Activated CD4-positive, alpha-beta T cell treated with anti-CD3 and anti-CD28 coated beads for 36 hours (primary cell): ENCODE measurements at regions of chr17 and their contacts with region 1.

Region 1: GRCh38 chr17:48724251-48725003 is 1.4 kb downstream of the PRAC2 start:
- DNase-seq: peak; percentile 91
- ATAC-seq: peak; percentile 78
- H3K4me3 Mint-ChIP-seq: peak overlapping the region; percentile 42
- H3K27ac Mint-ChIP-seq: peak overlapping the region; percentile 55
- H3K4me1 Mint-ChIP-seq: peaks cover 32% of the 10 kb centered on the region
- H3K27me3 Mint-ChIP-seq: peaks cover 81% of the 10 kb centered on the region

Region 2: DNA sequence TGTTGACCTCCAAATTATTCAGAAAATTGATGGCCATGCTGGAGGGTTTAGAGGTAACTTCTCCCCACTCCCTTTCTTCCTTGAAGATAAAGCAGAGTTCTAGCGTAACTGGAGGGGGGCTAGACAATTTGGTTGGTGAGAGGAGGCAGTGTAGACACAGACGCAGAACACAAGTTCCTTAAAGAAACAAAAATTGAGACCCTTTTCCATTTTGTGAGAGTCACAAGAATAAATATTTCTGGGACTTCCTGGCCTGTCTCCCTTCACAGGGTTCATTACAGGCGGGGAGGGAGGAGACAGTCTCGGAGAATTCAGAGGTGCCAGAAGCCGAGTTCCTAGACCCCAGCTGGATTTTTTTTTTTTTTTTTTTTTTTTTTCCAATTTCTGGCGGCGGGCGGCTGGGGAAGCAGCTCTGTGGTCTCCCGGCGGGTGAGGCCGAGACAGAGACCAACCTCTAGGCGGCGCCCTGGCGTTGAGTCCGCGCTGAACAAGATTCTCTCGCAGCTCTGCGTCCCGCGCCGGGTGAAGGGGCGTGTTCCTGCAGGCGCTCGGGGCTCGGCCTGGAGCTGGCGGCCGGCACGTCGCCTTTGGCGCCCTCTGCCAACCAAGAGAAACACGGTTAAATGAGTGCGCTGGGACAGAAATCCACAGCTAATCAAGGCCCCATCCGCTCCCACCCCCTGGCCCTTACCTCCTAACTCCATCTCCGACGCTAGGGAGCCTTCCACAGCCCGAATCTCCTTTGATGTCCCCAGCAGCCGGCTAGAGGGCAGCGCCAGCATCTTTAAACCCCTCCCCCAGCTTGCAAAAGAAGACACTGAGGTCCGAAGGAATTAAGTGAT is 88.0 kb before region 1 on chr17:
- CTCF ChIA-PET with region 1: interaction called, 10 read pairs
- POLR2A ChIA-PET with region 1: no interaction called
- intact Hi-C with region 1: no loop called
- DNase-seq: peak; percentile 91
- ATAC-seq: peak; percentile 95
- H3K4me3 Mint-ChIP-seq: no peak overlapping the region
- H3K27ac Mint-ChIP-seq: no peak overlapping the region
- H3K4me1 Mint-ChIP-seq: no peaks in the 10 kb centered on the region
- H3K27me3 Mint-ChIP-seq: peaks cover 74% of the 10 kb centered on the region

Region 3: GRCh38 chr17:48738803-48739526 is 14.5 kb after region 1 on chr17:
- CTCF ChIA-PET with region 1: interaction called, 37 read pairs
- POLR2A ChIA-PET with region 1: no interaction called
- intact Hi-C with region 1: loop called in 1 of 2 experiments (anchors 2 kb)
- DNase-seq: no peak
- ATAC-seq: peak; percentile 30
- H3K4me3 Mint-ChIP-seq: no peak overlapping the region
- H3K27ac Mint-ChIP-seq: no peak overlapping the region
- H3K4me1 Mint-ChIP-seq: peaks cover 8% of the 10 kb centered on the region
- H3K27me3 Mint-ChIP-seq: peaks cover 83% of the 10 kb centered on the region

Region 4: GRCh38 chr17:48760411-48760810 is 36.0 kb after region 1 on chr17:
- CTCF ChIA-PET with region 1: interaction called, 10 read pairs
- POLR2A ChIA-PET with region 1: no interaction called
- intact Hi-C with region 1: no loop called
- DNase-seq: no peak
- ATAC-seq: no peak
- H3K4me3 Mint-ChIP-seq: no peak overlapping the region
- H3K27ac Mint-ChIP-seq: no peak overlapping the region
- H3K4me1 Mint-ChIP-seq: no peaks in the 10 kb centered on the region
- H3K27me3 Mint-ChIP-seq: peaks cover 56% of the 10 kb centered on the region

Region 5: DNA sequence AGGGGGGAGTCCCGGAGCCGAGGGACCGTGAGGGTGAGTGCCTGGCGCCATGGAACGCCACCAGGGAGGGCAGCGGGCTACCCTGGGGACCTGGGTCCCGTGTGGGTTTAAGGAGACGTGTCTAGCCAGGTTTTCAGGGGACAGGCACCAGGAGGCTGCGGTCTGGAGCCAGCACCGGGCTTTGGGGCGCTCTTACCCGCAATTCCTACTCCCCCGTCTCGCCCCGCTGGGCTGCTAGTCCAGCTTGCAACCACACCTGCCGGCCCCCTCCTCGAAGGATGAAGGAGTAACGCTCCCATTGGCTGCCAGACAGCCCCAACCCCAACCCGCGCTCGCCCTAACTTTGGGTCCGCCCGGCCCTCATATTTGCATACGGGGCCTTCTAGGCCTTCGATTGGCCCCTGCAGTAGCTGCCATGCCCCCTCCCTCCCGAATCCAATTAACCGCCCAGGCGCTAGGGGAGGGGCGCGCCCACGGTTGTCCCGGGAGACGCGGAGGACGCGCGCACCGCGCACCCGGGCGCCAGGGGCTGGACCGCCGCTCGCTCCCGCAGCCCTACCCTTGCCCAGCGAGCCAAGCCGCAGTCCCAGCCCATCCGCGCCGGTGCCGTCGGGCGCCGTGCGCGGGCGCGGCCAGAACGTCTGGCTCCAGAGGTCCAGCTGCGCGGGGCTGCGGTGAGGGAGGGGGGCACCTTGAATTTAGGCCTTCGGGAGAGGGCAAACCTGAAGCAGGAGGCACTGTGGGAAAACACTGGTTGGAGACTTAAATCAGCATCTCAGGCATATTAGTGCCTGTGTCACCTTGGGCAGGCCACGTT is 92.6 kb after region 1 on chr17 and contains the start of gene TTLL6:
- CTCF ChIA-PET with region 1: interaction called, 10 read pairs
- POLR2A ChIA-PET with region 1: no interaction called
- intact Hi-C with region 1: no loop called
- DNase-seq: peak; percentile 80
- ATAC-seq: peak; percentile 93
- H3K4me3 Mint-ChIP-seq: peak within 1 kb of the TSS; percentile 63
- H3K27ac Mint-ChIP-seq: no peak within 1 kb of the TSS
- H3K4me1 Mint-ChIP-seq: peaks cover 15% of the 10 kb centered on the region
- H3K27me3 Mint-ChIP-seq: peaks cover 35% of the 10 kb centered on the region
- total RNA-seq, gene TTLL6: not detected

Region 6: GRCh38 chr17:49496183-49496866 is 771.9 kb after region 1 on chr17:
- CTCF ChIA-PET with region 1: no interaction called
- POLR2A ChIA-PET with region 1: no interaction called
- intact Hi-C with region 1: loop called in 1 of 2 experiments (anchors 10 kb)
- DNase-seq: peak; percentile 92
- ATAC-seq: peak; percentile 85
- H3K4me3 Mint-ChIP-seq: peak overlapping the region; percentile 63
- H3K27ac Mint-ChIP-seq: no peak overlapping the region
- H3K4me1 Mint-ChIP-seq: peaks cover 16% of the 10 kb centered on the region
- H3K27me3 Mint-ChIP-seq: peaks cover 51% of the 10 kb centered on the region